Tibial artery (tissue), 4 donors: ENCODE measurements at regions of chr20 and their contacts with region 1.

Region 1: GRCh38 chr20:63979560-63980316 is at the start of gene SAMD10:
- DNase-seq: peak in 1 of 2 donors; percentile 69
- H3K4me3 ChIP-seq: peak within 1 kb of the TSS; percentile 97 to 98
- H3K27ac ChIP-seq: peak within 1 kb of the TSS; percentile 35 to 89
- H3K4me1 ChIP-seq: peaks cover 0 to 51% (median 39%) of the 10 kb centered on the region in 4 donors
- H3K27me3 ChIP-seq: no peaks in the 10 kb centered on the region
- CTCF ChIP-seq: peak in 1 of 2 experiments; percentile 15

Region 2: GRCh38 chr20:63425846-63426485 is 553.8 kb before region 1 on chr20:
- intact Hi-C with region 1: no loop called
- DNase-seq: no peak
- H3K4me3 ChIP-seq: no peak overlapping the region
- H3K27ac ChIP-seq: no peak overlapping the region
- H3K4me1 ChIP-seq: no peaks in the 10 kb centered on the region
- H3K27me3 ChIP-seq: peaks cover 0 to 61% of the 10 kb centered on the region in 2 donors
- CTCF ChIP-seq: no peak

Region 3: DNA sequence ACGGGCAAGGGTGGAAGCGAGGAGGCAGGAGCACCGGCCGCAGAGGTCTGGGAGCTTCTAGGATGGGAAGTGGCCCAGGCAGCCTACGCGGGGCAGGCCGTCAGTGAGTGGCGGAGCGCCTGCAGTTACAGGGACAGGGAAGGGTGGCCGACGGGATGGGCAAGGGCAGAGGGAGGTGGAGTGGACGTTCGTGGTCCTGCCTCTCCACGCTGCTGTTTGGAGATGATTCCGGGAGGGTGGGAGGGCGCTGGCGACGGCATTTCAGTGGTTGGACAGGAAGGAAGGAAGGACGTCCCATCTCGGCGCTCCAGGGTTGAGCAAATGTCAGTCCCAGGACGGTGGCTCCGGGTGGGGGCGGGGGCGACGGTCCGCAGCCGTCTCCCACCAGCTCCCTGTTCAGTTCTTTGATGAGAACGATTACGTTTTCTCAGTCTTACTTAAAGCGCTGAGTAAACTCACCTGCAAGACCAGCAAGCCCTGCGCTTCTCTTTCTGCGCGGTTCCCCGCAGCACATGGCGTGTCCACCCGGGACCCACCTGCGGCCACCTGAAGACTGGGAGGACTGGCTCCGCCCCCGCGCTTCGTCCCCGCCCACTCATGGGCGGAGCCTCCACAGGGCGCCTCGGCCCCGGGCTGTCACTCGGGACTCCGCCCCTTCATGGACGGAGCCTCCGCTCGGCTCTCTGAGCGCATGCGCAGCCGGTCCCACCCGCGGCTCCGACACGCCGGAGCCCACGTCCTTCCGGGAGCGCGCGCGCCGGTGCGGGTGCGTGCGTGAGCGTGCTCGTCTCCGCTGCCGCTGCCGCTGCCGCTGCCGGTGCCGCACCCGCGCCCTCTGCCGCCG is 85.2 kb before region 1 on chr20 and contains the start of gene DNAJC5:
- intact Hi-C with region 1: loop called (anchors 5 kb)
- DNase-seq: peak; percentile 89 to 97
- H3K4me3 ChIP-seq: peak within 1 kb of the TSS; percentile 62 to 81
- H3K27ac ChIP-seq: peak within 1 kb of the TSS; percentile 70 to 72
- H3K4me1 ChIP-seq: peaks cover 0 to 34% (median 23%) of the 10 kb centered on the region in 4 donors
- H3K27me3 ChIP-seq: no peaks in the 10 kb centered on the region
- CTCF ChIP-seq: no peak